Gastrocnemius medialis (tissue), 4 donors: ENCODE measurements at regions of chr3 and their contacts with region 1.

Region 1: GRCh38 chr3:102229062-102229655 is 205.7 kb upstream of the ZPLD1 start:
- DNase-seq: peak; percentile 40 to 61
- ATAC-seq: peak; percentile 76 to 82
- H3K4me3 ChIP-seq: no peak overlapping the region
- H3K27ac ChIP-seq: no peak overlapping the region
- H3K4me1 ChIP-seq: no peaks in the 10 kb centered on the region
- H3K27me3 ChIP-seq: no peaks in the 10 kb centered on the region
- CTCF ChIP-seq: peak; percentile 72 to 93 (median 81)
- POLR2A ChIP-seq: no peak

Region 2: GRCh38 chr3:101695779-101696372 is 533.3 kb before region 1 on chr3:
- in situ Hi-C with region 1: no loop called
- intact Hi-C with region 1: loop called (anchors 5 kb)
- DNase-seq: no peak
- ATAC-seq: no peak
- H3K4me3 ChIP-seq: no peak overlapping the region
- H3K27ac ChIP-seq: no peak overlapping the region
- H3K4me1 ChIP-seq: no peaks in the 10 kb centered on the region
- H3K27me3 ChIP-seq: no peaks in the 10 kb centered on the region
- CTCF ChIP-seq: peak; percentile 65 to 83 (median 67)
- POLR2A ChIP-seq: no peak

Region 3: GRCh38 chr3:101803173-101803782 is 425.9 kb before region 1 on chr3:
- in situ Hi-C with region 1: loop called in 1 of 4 experiments (anchors 5 kb)
- intact Hi-C with region 1: loop called (anchors 5 kb)
- DNase-seq: peak in 1 of 2 donors; percentile 35
- ATAC-seq: peak; percentile 96
- H3K4me3 ChIP-seq: no peak overlapping the region
- H3K27ac ChIP-seq: peak overlapping the region in 2 of 4 donors; percentile 8 to 42
- H3K4me1 ChIP-seq: peaks cover 0 to 31% of the 10 kb centered on the region in 2 donors
- H3K27me3 ChIP-seq: no peaks in the 10 kb centered on the region
- CTCF ChIP-seq: peak; percentile 67 to 86 (median 77)
- POLR2A ChIP-seq: no peak

Region 4: DNA sequence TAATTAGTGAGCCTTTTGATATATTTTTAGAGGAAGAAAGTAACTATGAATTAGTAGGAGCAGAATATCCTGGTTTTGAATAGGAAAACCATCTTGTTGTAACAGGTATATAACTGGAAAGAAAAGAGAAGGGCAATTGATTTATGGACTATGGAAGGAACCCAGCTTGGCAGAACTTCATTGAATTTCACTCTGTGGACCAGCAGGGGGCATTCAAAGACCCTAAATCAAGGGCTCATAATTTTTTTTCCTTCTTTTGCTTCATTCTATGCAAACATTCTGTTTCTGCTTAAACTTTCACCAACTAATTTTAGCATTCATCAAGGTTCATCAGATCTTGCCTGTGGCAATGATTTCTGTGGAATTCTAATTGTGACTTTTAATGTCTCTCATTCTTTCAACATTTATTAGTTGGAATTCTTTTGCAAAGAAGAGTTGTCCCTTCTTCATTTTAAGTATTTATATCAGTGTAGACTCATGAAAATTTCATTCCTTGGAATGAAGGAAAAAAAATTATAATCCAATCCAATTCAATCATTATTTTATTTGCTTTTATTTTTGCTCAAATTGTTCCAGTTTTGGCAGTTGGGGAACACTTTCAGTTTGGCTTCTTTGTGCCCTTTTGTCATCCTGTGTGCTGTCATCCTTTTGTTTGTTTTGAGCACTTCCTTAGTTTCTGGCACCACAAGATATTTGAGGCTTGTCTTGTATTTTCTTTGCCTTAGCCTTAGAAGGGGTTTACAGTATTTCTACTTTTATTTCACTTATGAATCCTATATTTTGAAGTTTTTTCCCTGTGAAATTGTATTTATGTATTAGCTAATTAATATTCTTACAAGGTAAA is 419.8 kb before region 1 on chr3:
- in situ Hi-C with region 1: loop called in 3 of 4 experiments (anchors 5 to 10 kb)
- intact Hi-C with region 1: loop called (anchors 5 kb)
- DNase-seq: no peak
- ATAC-seq: peak; percentile 40 to 44
- H3K4me3 ChIP-seq: no peak overlapping the region
- H3K27ac ChIP-seq: peak overlapping the region in 1 of 4 donors; percentile 7
- H3K4me1 ChIP-seq: peaks cover 14 to 44% of the 10 kb centered on the region in 2 donors
- H3K27me3 ChIP-seq: no peaks in the 10 kb centered on the region
- CTCF ChIP-seq: peak; percentile 60 to 73 (median 61)
- POLR2A ChIP-seq: no peak

Region 5: GRCh38 chr3:101827211-101828174 is 401.7 kb before region 1 on chr3:
- in situ Hi-C with region 1: loop called in 1 of 4 experiments (anchors 10 kb)
- intact Hi-C with region 1: no loop called
- DNase-seq: peak; percentile 52
- ATAC-seq: peak; percentile 67 to 69
- H3K4me3 ChIP-seq: peak overlapping the region; percentile 51 to 77 (median 70)
- H3K27ac ChIP-seq: peak overlapping the region; percentile 80 to 85 (median 83)
- H3K4me1 ChIP-seq: peaks cover 28 to 41% of the 10 kb centered on the region in 2 donors
- H3K27me3 ChIP-seq: no peaks in the 10 kb centered on the region
- CTCF ChIP-seq: no peak
- POLR2A ChIP-seq: peak in 1 of 2 donors; percentile 53

Region 6: DNA sequence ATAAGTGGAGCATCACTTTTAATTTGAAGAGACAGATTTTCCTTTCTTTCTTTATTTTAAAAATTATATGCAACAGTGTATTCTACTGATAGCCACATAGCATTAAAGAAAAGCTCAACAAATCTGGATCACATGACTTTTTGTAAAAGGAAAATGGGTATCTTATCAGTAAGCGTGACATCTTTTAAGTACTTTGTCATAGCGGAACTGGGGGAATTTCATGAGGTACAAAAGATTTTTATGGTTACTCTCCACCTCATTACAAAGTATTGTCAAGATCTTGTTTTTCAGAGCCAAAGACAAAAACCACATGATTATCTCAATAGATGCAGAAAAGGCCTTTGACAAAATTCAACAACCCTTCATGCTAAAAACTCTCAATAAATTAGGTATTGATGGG is 14.0 kb before region 1 on chr3:
- in situ Hi-C with region 1: no loop called
- intact Hi-C with region 1: no loop called
- DNase-seq: no peak
- ATAC-seq: no peak
- H3K4me3 ChIP-seq: no peak overlapping the region
- H3K27ac ChIP-seq: no peak overlapping the region
- H3K4me1 ChIP-seq: no peaks in the 10 kb centered on the region
- H3K27me3 ChIP-seq: no peaks in the 10 kb centered on the region
- CTCF ChIP-seq: no peak
- POLR2A ChIP-seq: no peak

Region 7: GRCh38 chr3:102419786-102420185 is 190.6 kb after region 1 on chr3:
- in situ Hi-C with region 1: no loop called
- intact Hi-C with region 1: no loop called
- DNase-seq: no peak
- ATAC-seq: no peak
- H3K4me3 ChIP-seq: no peak overlapping the region
- H3K27ac ChIP-seq: no peak overlapping the region
- H3K4me1 ChIP-seq: no peaks in the 10 kb centered on the region
- H3K27me3 ChIP-seq: no peaks in the 10 kb centered on the region
- CTCF ChIP-seq: no peak
- POLR2A ChIP-seq: no peak